HCT116 (cell line): ENCODE measurements at regions of chr20 and their contacts with region 1.

Region 1: GRCh38 chr20:6767536-6768227 is at the start of gene BMP2:
- DNase-seq: no peak
- ATAC-seq: no peak
- H3K4me3 ChIP-seq: no peak within 1 kb of the TSS
- H3K27ac ChIP-seq: no peak within 1 kb of the TSS
- H3K4me1 ChIP-seq: no peaks in the 10 kb centered on the region
- H3K27me3 ChIP-seq: no peaks in the 10 kb centered on the region
- CTCF ChIP-seq: no peak
- POLR2A ChIP-seq: no peak
- RAD21 ChIP-seq: no peak
- total RNA-seq, gene BMP2: 0.15 TPM

Region 2: DNA sequence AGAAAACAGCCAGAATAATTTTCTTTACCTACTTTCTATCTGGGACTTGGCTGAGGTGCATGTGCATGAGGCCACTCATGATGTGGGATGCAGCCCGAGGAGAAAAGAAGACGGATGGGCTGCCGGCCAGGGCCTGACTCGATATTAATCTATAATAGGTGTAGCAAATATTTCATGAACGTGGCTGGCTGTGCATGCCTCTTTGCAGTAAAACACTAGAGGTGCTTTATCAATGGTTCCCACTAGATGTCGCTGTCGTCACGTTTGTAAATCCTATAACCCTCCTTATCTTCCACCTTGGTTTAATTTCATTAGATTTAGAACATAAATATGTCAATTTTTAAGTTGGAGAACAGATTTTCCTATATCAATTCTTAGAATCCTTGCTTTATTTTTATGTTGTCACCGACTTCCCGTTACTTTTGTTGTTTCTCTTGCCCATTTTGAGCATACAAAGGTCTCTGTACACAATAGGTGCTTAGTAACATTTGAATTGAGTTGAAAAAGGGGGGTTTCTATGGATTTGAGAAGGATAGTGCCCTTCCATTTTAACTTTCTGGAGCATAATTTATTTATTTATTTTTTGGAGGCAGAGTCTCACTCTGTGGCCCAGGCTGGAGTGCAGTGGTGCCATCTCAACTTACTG is 625.2 kb before region 1 on chr20:
- CTCF ChIA-PET with region 1: no interaction called
- POLR2A ChIA-PET with region 1: no interaction called
- RAD21 ChIA-PET with region 1: no interaction called
- intact Hi-C with region 1: loop called (anchors 10 kb)
- DNase-seq: peak; percentile 60
- ATAC-seq: peak; percentile 87
- H3K4me3 ChIP-seq: no peak overlapping the region
- H3K27ac ChIP-seq: no peak overlapping the region
- H3K4me1 ChIP-seq: peaks cover 0 to 4% of the 10 kb centered on the region in 2 experiments; a peak in 1 of 4 replicates
- H3K27me3 ChIP-seq: peaks cover 4% of the 10 kb centered on the region; the same call in 1 of the 2 replicates
- CTCF ChIP-seq: peak; percentile 44 to 88 (median 75); a peak in 5 of 6 replicates
- POLR2A ChIP-seq: no peak
- RAD21 ChIP-seq: peak; percentile 74

Region 3: DNA sequence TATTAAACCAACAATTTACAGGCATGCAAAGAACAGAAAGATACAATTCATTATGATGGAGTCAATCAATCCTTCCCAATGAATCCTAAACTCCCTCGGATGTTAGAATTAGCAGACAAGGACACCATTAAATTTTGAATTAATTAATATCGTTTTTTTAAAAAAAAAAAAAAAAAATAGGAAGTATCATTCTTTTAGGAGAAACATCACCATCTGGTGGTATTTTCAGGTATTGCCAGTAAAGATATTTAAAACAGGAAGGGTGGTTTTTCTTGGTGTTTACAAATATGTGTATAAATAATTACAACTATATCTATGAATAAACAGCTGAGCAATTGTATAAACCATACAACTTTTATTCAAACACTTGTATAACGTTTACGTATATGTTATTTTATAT is 608.2 kb after region 1 on chr20:
- CTCF ChIA-PET with region 1: no interaction called
- POLR2A ChIA-PET with region 1: no interaction called
- RAD21 ChIA-PET with region 1: no interaction called
- intact Hi-C with region 1: loop called (anchors 5 kb)
- DNase-seq: peak; percentile 2
- ATAC-seq: no peak
- H3K4me3 ChIP-seq: no peak overlapping the region
- H3K27ac ChIP-seq: no peak overlapping the region
- H3K4me1 ChIP-seq: no peaks in the 10 kb centered on the region
- H3K27me3 ChIP-seq: no peaks in the 10 kb centered on the region
- CTCF ChIP-seq: peak in 2 of 3 experiments; percentile 11 to 29; a peak in 2 of 6 replicates
- POLR2A ChIP-seq: no peak
- RAD21 ChIP-seq: peak; percentile 15; the same call in 1 of the 2 replicates

Region 4: DNA sequence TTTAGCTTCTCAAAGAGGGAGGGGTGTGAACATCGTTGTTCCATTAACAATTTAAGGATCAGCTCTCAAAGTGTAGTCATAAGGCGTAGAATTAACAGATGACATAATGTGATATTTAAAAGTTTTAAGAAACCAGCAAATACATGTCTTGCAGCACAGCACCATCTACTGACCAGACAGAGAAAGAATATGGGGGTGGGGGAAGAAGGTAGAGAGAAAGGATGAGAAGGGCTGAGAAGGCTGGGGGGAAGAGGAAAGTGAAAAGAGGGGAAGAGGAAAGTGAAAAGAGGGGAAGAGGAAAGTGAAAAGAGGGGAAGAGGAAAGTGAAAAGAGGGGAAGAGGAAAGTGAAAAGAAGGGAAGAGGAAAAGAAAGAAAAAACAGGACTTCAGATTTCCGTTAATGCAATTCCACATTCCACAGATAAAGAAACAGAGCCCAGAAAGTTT is 1091.7 kb after region 1 on chr20:
- CTCF ChIA-PET with region 1: no interaction called
- POLR2A ChIA-PET with region 1: no interaction called
- RAD21 ChIA-PET with region 1: no interaction called
- intact Hi-C with region 1: loop called (anchors 10 kb)
- DNase-seq: no peak
- ATAC-seq: peak; percentile 47; the same call in 1 of the 2 replicates
- H3K4me3 ChIP-seq: no peak overlapping the region
- H3K27ac ChIP-seq: no peak overlapping the region
- H3K4me1 ChIP-seq: peaks cover 0 to 15% of the 10 kb centered on the region in 2 experiments; a peak in 2 of 4 replicates
- H3K27me3 ChIP-seq: no peaks in the 10 kb centered on the region
- CTCF ChIP-seq: peak; percentile 32 to 69 (median 52); a peak in 5 of 6 replicates
- POLR2A ChIP-seq: no peak
- RAD21 ChIP-seq: peak; percentile 66

Region 5: GRCh38 chr20:7926767-7927166 is 1159.1 kb after region 1 on chr20:
- CTCF ChIA-PET with region 1: no interaction called
- POLR2A ChIA-PET with region 1: no interaction called
- RAD21 ChIA-PET with region 1: no interaction called
- intact Hi-C with region 1: loop called (anchors 5 kb)
- DNase-seq: peak; percentile 12
- ATAC-seq: no peak
- H3K4me3 ChIP-seq: no peak overlapping the region
- H3K27ac ChIP-seq: no peak overlapping the region
- H3K4me1 ChIP-seq: no peaks in the 10 kb centered on the region
- H3K27me3 ChIP-seq: peaks cover 5% of the 10 kb centered on the region; the same call in 1 of the 2 replicates
- CTCF ChIP-seq: peak in 2 of 3 experiments; percentile 44 to 62; a peak in 4 of 6 replicates
- POLR2A ChIP-seq: no peak
- RAD21 ChIP-seq: peak; percentile 57; the same call in 1 of the 2 replicates